ENCODE measurements at regions of chr15 and their contacts with region 1.

Region 1: DNA sequence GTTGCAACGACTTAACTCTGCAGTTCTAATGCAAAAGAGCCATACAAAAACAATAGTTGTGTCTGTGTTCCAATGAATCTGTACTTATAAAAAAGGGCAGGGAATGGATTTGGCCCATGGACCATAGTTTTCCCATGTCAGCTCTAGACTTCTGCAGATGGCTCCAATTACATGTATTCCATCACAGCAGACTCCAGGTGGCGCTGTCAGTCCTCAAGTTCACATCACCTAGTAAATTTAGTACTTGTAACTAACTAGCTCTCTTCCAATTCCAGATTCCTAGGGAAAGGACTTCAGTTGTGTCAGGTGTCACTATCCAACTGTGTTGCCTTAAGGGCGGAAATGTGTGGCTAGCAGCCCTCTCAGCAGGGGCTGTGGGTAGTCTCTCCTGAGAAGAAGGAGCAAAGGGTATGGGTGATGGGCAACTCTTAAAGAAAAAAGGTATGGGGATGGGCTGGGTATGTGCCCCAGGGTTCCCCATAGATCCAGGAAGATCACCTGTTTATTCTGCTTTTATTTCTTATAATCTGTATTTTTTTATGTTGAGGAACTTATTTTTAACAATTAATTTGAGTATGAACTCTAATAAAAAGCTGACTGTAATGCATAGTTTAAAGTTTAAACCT is 36.2 kb downstream of the BBS4 start:
- DNase-seq: peak; percentile 37 to 76 (median 71)
- ATAC-seq: no peak
- H3K4me3 ChIP-seq: no peak overlapping the region
- H3K4me3 Mint-ChIP-seq: no peak overlapping the region
- H3K27ac ChIP-seq: no peak overlapping the region
- H3K27ac Mint-ChIP-seq: no peak overlapping the region
- H3K4me1 ChIP-seq: no peaks in the 10 kb centered on the region
- H3K4me1 Mint-ChIP-seq: no peaks in the 10 kb centered on the region
- H3K27me3 ChIP-seq: no peaks in the 10 kb centered on the region
- H3K27me3 Mint-ChIP-seq: no peaks in the 10 kb centered on the region
- CTCF ChIP-seq: peak; percentile 70

Region 2: DNA sequence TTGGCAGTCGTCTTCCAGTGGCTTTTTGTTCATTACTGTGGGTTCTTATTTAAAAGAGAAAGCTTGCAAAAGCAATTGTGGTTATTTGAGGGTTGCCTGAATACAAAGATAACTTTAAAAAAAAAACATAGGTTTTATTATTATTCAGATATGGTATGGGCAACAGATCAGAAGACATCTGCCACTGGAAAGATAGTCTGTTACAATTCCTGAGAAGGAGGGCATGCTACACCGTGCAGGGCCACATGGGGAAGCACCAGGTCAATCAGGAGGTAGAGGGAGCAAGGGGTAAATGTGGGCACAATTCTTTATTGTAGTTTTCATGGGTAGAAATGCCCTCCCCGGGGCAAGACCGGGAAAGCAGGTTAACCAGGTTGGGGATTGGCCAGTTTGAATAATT is 10.3 kb after region 1 on chr15:
- CTCF ChIA-PET with region 1: interaction called, 30 read pairs
- POLR2A ChIA-PET with region 1: no interaction called
- intact Hi-C with region 1: no loop called
- DNase-seq: no peak
- ATAC-seq: no peak
- H3K4me3 ChIP-seq: no peak overlapping the region
- H3K4me3 Mint-ChIP-seq: no peak overlapping the region
- H3K27ac ChIP-seq: no peak overlapping the region
- H3K27ac Mint-ChIP-seq: peak overlapping the region; percentile 37
- H3K4me1 ChIP-seq: no peaks in the 10 kb centered on the region
- H3K4me1 Mint-ChIP-seq: no peaks in the 10 kb centered on the region
- H3K27me3 ChIP-seq: no peaks in the 10 kb centered on the region
- H3K27me3 Mint-ChIP-seq: no peaks in the 10 kb centered on the region
- CTCF ChIP-seq: no peak

Region 3: DNA sequence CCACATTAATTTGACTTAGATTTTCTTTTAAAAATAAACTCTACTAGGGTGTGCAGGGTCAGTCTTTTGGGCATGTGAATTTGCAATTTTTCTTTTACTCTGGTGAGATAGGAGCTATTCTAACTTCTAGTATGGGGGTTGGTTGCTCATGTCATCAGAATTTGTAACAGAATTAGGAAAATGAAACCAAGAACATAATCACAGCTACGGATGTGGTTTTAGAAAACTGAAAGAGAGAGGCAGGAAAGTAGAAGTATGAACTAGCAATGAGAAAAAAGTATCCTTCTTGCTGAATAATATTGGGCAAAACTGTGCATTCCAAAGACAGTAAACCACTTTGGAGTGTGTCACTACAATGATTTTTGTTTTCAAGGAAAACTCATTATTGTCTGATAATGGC is 18.0 kb after region 1 on chr15:
- CTCF ChIA-PET with region 1: interaction called, 30 read pairs
- POLR2A ChIA-PET with region 1: no interaction called
- intact Hi-C with region 1: no loop called
- DNase-seq: peak in 2 of 9 experiments; percentile 23 to 41
- ATAC-seq: peak; percentile 42
- H3K4me3 ChIP-seq: no peak overlapping the region
- H3K4me3 Mint-ChIP-seq: peak overlapping the region; percentile 53
- H3K27ac ChIP-seq: peak overlapping the region in 1 of 2 experiments; percentile 60
- H3K27ac Mint-ChIP-seq: peak overlapping the region; percentile 78
- H3K4me1 ChIP-seq: peaks cover 20% of the 10 kb centered on the region
- H3K4me1 Mint-ChIP-seq: peaks cover 27% of the 10 kb centered on the region
- H3K27me3 ChIP-seq: no peaks in the 10 kb centered on the region
- H3K27me3 Mint-ChIP-seq: no peaks in the 10 kb centered on the region
- CTCF ChIP-seq: no peak

Measured in CD8-positive, alpha-beta T cell (primary cell).